ENCODE measurements at regions of chr19 and their contacts with region 1.

Region 1: GRCh38 chr19:10915130-10916091 is 13.0 kb downstream of the YIPF2 start:
- DNase-seq: no peak
- H3K4me3 ChIP-seq: no peak overlapping the region
- CTCF ChIP-seq: no peak

Region 2: DNA sequence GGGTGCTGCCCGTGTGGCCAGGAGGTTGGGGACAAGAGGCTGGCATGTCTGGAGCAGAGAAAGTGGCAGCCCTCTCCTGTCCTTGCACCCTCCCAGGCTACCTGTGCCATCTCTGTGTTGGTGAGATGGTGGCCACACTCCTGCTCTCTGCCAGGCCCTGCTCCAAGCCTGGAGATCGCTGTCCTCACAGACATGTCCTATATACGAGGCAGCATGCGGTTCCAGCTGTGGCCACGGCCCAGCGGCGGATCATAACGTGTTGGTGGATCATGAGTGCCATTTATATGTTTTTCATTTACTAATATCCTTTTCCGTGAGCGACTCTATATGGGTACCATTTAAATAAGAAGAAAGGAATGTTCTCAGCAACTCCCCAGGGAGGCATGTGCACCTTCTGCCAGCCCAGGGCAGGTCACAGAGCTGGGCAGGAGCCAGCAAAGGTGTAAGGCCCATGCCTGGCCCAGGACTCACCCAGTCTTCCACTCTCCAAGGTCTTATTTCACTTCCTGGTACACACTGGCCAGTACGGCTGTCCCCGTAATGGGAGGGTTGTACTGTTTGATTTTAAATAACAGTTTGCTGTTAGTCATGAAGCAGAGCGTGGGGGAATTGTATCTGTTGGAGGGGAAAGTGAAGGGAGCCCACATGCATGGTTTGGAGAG is 126.7 kb after region 1 on chr19:
- in situ Hi-C with region 1: loop called (anchors 10 kb)
- DNase-seq: no peak
- H3K4me3 ChIP-seq: no peak overlapping the region
- CTCF ChIP-seq: no peak